ENCODE measurements at regions of chr6 and their contacts with region 1.

Region 1: DNA sequence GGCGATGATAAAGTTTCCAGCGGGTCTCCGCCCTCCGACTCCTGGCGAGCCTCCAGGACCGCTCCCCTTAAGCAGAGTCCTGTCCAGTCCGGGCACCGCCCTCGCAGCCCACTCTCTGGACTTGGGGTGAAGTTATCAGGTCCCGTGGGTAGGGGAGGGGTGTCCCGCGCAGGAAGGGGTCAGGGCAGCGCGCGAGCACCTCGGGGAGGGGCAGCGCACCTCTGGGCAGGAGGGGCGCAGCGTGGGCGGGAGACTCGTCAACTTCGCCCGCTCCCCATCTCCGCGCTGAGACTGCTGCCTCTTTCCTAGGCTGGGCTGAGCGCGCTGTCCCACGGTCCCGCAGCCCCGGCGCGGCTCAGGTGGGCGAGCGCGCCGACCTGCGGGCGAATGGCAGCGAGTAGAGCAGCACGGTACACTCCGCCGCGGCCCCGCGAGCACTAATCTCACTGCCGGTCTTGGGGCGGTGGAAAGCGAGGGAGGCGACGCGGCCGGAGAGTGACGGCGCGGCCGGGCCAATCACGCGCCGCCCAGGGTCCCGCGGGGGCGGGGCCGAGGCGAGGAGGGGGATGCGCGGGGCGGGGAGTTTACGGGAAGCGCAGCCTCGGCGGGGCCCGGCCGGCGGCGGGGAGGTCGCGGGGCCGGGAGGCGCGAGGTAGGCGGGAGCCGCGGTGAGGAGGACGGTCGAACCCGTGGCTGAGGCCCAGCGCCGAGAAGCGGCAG is at the start of gene MAN1A1:
- DNase-seq: peak; percentile 88
- H3K4me3 Mint-ChIP-seq: peak within 1 kb of the TSS; percentile 84
- H3K27ac Mint-ChIP-seq: peak within 1 kb of the TSS; percentile 96
- H3K4me1 Mint-ChIP-seq: peaks cover 37% of the 10 kb centered on the region
- H3K27me3 Mint-ChIP-seq: no peaks in the 10 kb centered on the region
- total RNA-seq, gene MAN1A1: 14.8 to 15.1 TPM

Region 2: DNA sequence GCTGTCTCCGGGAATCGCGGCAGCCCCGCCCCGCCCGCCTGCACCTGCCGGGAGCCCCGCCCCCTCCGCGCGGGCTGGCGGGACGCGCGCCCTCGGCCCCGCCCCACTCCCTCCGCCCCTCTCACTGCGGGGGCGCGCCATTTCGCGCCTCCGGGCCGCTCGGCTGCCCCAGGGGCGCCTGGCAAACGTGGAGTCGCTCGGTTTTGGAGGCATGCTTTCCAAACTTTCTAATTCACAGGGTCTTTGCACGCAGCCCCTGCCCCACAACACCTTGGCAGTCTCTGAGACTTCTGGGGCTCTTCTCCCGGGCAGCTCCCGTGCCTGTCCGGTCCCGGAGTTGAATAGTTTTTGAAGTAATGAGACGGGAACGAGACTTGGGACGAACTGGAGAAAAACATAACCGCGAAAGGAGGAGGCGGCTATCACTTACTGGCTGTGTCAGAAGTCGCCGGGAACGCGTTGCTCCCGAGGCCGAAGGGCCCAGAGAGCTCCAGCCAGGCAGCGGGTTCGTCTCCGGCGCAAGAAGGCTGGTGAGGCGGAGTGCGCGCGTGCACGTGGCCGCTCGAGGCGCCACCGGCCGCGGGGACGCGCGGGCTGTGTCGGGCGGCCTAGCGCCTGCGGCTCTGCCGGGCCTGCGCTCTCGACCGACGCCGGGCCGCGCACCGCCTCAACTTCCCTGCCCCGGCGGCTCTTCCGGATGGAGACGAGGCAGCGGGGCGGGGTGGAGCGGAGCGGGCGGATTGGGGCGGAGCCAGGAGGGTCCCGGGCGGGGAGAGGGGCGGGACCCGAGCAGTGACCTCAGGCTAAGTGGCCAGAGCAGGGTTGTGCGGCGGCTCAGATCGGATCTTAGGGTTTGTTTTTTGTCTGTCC is 414.8 kb before region 1 on chr6 and contains the start of gene MCM9:
- CTCF ChIA-PET with region 1: no interaction called
- intact Hi-C with region 1: loop called (anchors 1 kb)
- DNase-seq: peak; percentile 89
- H3K4me3 Mint-ChIP-seq: peak within 1 kb of the TSS; percentile 87
- H3K27ac Mint-ChIP-seq: peak within 1 kb of the TSS; percentile 90
- H3K4me1 Mint-ChIP-seq: peaks cover 29% of the 10 kb centered on the region
- H3K27me3 Mint-ChIP-seq: no peaks in the 10 kb centered on the region
- total RNA-seq, gene MCM9: 16.3 to 16.4 TPM

Region 3: DNA sequence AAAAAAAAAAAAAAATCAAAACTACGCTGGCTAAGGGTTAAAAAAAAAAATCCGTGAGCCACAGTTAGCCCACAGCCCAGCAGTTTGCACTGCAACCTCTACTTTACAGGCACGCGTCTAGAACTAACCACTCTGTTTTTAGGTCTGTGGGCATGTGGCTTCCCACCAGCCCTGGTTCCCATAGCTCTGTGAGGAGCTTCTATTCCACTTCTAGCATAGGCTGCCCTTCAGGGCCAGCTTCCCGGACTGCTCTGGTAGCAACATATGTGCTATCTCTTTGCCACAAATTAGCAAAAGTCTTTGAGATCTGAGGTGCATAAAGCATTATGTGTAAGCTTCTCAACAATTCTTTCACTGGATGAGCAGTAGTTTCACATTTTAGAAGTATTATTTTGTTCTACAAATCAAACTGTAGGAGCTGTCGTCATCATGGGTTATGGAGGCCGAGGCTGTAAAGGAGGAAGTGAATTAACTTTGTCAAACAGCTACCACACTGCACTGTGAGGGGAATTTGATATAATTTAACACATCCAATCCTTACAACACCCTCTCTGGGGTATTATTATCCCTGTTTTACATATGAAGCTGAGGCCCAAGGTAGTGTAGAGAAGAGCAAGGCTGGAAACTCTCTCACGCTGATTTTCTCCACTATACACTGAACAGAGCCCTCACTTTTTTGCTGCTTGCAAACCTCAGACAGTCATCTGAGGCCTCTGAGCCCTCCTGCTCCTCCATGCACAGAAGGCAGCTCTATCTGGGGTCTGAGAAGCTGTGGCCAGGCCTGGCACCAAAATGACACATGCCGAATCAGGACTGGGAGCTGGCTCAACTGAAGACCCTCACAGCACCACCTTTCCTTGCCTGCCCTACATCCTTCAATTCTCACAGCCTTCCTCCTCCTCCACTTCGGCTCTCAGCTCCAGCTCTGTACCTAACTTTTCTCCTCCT is 35.3 kb before region 1 on chr6:
- CTCF ChIA-PET with region 1: interaction called, 10 read pairs
- intact Hi-C with region 1: loop called (anchors 1 kb)
- DNase-seq: peak; percentile 65
- H3K4me3 Mint-ChIP-seq: peak overlapping the region; percentile 41
- H3K27ac Mint-ChIP-seq: peak overlapping the region; percentile 92
- H3K4me1 Mint-ChIP-seq: peaks cover 58% of the 10 kb centered on the region
- H3K27me3 Mint-ChIP-seq: no peaks in the 10 kb centered on the region

Region 4: DNA sequence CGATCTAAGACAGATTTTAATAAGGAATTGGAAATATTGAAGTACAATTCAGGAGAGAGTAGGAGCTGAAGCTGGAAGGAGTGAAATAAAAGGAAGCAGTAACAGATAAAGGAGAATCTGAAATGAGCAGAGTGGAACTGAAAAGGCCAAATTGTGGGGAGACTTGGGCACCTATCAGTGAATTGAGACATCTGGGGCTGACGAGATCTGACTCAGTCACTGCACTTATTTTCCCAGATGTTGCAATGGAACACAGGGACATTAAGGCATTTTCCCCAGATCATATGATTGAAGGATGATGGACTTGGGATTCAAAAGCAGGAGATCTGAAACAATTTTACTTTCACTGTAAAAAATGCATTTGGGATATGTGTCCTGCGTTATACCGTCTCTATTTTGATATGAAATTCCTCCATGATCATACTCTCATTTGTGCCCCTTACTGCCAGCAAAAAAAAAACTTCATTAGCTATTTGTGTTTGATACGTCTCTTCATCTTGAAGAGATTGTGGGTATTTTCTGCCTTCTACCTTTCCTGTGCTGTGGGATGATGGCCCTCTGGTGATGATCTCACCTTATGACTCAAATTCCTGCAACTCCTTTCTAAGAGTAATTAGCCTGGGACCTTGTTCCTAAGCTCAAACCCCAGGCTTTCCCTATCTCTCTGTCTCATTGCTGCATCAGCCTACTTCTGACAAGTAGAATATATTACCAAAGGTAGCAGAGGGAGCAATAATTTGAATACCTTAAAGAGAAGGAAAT is 278.6 kb after region 1 on chr6:
- CTCF ChIA-PET with region 1: no interaction called
- intact Hi-C with region 1: loop called (anchors 5 kb)
- DNase-seq: no peak
- H3K4me3 Mint-ChIP-seq: no peak overlapping the region
- H3K27ac Mint-ChIP-seq: no peak overlapping the region
- H3K4me1 Mint-ChIP-seq: no peaks in the 10 kb centered on the region
- H3K27me3 Mint-ChIP-seq: peaks cover 3% of the 10 kb centered on the region

Region 5: DNA sequence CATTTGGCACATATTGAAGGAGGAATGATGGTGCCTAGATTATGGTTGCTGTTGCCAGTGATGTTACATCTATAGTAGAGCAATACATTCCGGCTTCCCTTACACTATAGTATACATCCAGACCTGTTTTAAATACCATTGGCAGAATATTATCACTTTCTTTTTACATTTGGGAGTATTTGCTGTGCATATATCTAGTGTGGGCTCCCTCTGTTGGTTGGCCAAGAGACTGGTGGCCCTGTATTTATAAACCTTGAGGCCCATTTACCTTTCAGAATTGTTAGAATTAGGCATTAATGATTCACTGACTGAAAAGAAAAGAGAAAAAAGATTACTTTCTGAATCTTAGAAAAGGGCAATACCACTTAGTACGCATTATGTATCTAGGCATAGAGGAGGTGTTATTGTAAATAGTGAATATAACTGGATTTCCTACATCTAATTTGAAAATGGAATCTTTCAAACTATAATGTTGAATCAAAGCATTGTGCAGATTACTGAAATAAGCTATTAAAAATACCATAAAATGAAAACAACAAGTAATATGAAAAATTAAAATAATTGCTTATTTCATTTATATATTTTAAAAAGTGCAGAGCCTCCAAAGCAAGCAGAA is 628.9 kb after region 1 on chr6:
- CTCF ChIA-PET with region 1: no interaction called
- intact Hi-C with region 1: loop called (anchors 2 kb)
- DNase-seq: peak; percentile 16
- H3K4me3 Mint-ChIP-seq: no peak overlapping the region
- H3K27ac Mint-ChIP-seq: no peak overlapping the region
- H3K4me1 Mint-ChIP-seq: no peaks in the 10 kb centered on the region
- H3K27me3 Mint-ChIP-seq: no peaks in the 10 kb centered on the region

Measured in activated naive CD4-positive, alpha-beta T cell treated with anti-CD3 and anti-CD28 coated beads for 36 hours (primary cell).